Heart left ventricle (tissue), 16 donors: ENCODE measurements at regions of chr10 and their contacts with region 1.

Region 1: DNA sequence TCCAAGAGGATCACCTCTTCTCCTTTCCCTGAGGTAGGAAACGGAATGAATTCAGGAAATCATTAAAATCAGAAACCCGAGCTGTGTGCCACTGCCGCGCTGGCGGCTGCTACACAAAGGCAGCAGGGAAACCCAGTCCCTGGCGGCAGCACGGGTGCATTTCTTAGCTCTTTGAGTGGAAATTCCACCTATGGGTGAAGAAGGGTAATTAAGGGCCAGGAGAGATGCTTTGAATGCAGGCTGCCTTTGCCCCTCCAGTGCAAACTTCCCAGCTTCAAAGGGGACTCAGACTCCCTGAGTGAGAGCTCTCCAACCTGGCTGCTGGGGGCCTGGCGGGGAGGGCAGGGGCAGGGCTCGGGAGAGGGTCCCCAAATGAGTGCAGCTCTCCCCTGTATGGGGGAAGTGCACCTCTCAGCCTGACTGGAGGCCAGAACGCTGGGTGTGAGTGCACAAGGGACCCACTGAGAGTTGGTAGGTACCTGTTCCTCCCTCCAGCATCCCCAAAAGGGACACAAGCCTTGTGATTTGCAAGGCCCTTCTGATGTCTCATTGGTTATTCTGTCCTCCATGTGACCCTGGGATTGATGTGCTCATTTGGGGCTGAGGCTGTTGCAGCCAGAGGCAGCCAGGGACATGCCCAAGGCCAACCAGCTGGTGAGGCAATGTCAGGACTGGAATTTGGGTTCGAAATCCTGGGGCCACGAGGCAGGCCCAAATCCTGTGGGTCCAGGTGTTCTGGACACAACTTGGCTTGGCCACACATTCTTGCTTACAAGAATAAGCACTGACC is 16.3 kb upstream of the ZMIZ1 start:
- DNase-seq: peak in 2 of 5 donors; percentile 4 to 18
- ATAC-seq: no peak
- H3K4me3 ChIP-seq: no peak overlapping the region
- H3K27ac ChIP-seq: no peak overlapping the region
- H3K4me1 ChIP-seq: peaks cover 0 to 33% (median 9%) of the 10 kb centered on the region in 12 donors
- H3K27me3 ChIP-seq: no peaks in the 10 kb centered on the region
- CTCF ChIP-seq: no peak
- POLR2A ChIP-seq: no peak

Region 2: DNA sequence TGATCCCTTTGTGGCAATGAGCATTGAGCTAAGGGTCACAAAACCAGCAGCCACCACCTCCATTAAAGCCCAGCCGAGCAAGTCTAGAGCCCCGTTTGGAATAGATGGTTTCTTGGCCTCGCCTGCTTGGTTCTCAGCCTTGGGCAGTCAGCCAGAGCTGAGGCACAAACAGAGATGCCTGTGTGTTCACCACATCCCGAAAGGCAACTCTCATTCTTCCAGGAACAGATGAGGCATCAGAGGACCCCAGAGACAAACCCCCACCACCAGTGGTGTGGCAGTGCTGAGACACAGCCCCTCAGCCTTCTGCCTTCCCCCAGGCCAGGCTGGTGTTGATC is 187.0 kb before region 1 on chr10:
- intact Hi-C with region 1: loop called in 1 of 10 experiments (anchors 10 kb)
- DNase-seq: no peak
- ATAC-seq: no peak
- H3K4me3 ChIP-seq: no peak overlapping the region
- H3K27ac ChIP-seq: no peak overlapping the region
- H3K4me1 ChIP-seq: peaks cover 0 to 12% (median 0%) of the 10 kb centered on the region in 12 donors
- H3K27me3 ChIP-seq: peaks cover 0 to 3% (median 0%) of the 10 kb centered on the region in 9 donors
- CTCF ChIP-seq: no peak
- POLR2A ChIP-seq: no peak

Region 3: GRCh38 chr10:79390551-79391209 is 338.2 kb after region 1 on chr10:
- intact Hi-C with region 1: no loop called
- DNase-seq: peak in 4 of 5 donors; percentile 23 to 66 (median 32)
- ATAC-seq: peak in 1 of 4 donors; percentile 10
- H3K4me3 ChIP-seq: no peak overlapping the region
- H3K27ac ChIP-seq: peak overlapping the region in 4 of 12 donors; percentile 2 to 83 (median 28)
- H3K4me1 ChIP-seq: peaks cover 0 to 66% (median 29%) of the 10 kb centered on the region in 12 donors
- H3K27me3 ChIP-seq: no peaks in the 10 kb centered on the region
- CTCF ChIP-seq: peak in 4 of 12 donors; percentile 4 to 29 (median 11)
- POLR2A ChIP-seq: no peak